ENCODE measurements at regions of chr13 and their contacts with region 1.

Region 1: GRCh38 chr13:99553033-99553432 is 51.8 kb downstream of the TM9SF2 start:
- DNase-seq: no peak
- ATAC-seq: no peak
- H3K4me3 ChIP-seq: no peak overlapping the region
- H3K4me3 Mint-ChIP-seq: no peak overlapping the region
- H3K27ac ChIP-seq: no peak overlapping the region
- H3K27ac Mint-ChIP-seq: no peak overlapping the region
- H3K4me1 ChIP-seq: peaks cover under 1% of the 10 kb centered on the region
- H3K4me1 Mint-ChIP-seq: peaks cover 20% of the 10 kb centered on the region
- H3K27me3 ChIP-seq: no peaks in the 10 kb centered on the region
- H3K27me3 Mint-ChIP-seq: no peaks in the 10 kb centered on the region
- CTCF ChIP-seq: no peak

Region 2: DNA sequence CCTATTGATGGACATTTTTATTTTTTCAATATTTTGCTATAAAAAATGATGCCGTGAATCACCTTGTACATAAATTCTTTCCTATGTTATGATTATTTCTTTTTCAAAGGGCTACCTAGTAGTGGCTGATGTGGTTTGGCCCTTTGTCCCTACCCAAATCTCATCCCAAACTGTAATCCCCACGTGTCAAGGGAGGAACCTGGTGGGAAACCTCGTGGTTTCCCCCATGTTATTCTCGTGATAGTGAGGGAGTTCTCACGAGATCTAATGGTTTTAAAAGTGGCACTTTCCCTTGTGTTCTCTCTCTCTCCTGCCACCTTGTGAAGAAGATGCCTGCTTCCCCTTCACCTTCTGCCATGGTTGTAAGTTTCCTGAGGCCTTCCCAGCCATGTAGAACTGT is 43.1 kb after region 1 on chr13:
- CTCF ChIA-PET with region 1: no interaction called
- POLR2A ChIA-PET with region 1: no interaction called
- intact Hi-C with region 1: loop called in 1 of 2 experiments (anchors 5 kb)
- DNase-seq: no peak
- ATAC-seq: no peak
- H3K4me3 ChIP-seq: no peak overlapping the region
- H3K4me3 Mint-ChIP-seq: no peak overlapping the region
- H3K27ac ChIP-seq: no peak overlapping the region
- H3K27ac Mint-ChIP-seq: no peak overlapping the region
- H3K4me1 ChIP-seq: peaks cover 3% of the 10 kb centered on the region
- H3K4me1 Mint-ChIP-seq: peaks cover 19% of the 10 kb centered on the region
- H3K27me3 ChIP-seq: no peaks in the 10 kb centered on the region
- H3K27me3 Mint-ChIP-seq: no peaks in the 10 kb centered on the region
- CTCF ChIP-seq: no peak

Measured in CD4-positive, alpha-beta T cell (primary cell).